BJ (cell line): ENCODE measurements at regions of chr15 and their contacts with region 1.

Region 1: GRCh38 chr15:66356345-66357236 is at the start of gene TIPIN:
- DNase-seq: peak; percentile 71
- H3K4me3 ChIP-seq: peak within 1 kb of the TSS; percentile 74
- H3K27me3 ChIP-seq: no peaks in the 10 kb centered on the region
- CTCF ChIP-seq: no peak
- polyA plus RNA-seq, gene TIPIN: 3.0 and 6.8 TPM in 2 replicates

Region 2: GRCh38 chr15:67575039-67575502 is 1218.5 kb after region 1 on chr15:
- CTCF ChIA-PET with region 1: no interaction called
- POLR2A ChIA-PET with region 1: interaction called, 22 read pairs
- DNase-seq: no peak
- H3K4me3 ChIP-seq: no peak overlapping the region
- H3K27me3 ChIP-seq: no peaks in the 10 kb centered on the region
- CTCF ChIP-seq: no peak